MCF 10A (cell line): ENCODE measurements at regions of chr19 and their contacts with region 1.

Region 1: GRCh38 chr19:45469132-45469944 is 1.5 kb downstream of the FOSB start:
- DNase-seq: peak; percentile 97
- H3K4me3 Mint-ChIP-seq: peak overlapping the region; percentile 82
- H3K27ac Mint-ChIP-seq: peak overlapping the region; percentile 97
- H3K4me1 Mint-ChIP-seq: no peaks in the 10 kb centered on the region
- H3K27me3 Mint-ChIP-seq: no peaks in the 10 kb centered on the region
- CTCF ChIP-seq: no peak

Region 2: DNA sequence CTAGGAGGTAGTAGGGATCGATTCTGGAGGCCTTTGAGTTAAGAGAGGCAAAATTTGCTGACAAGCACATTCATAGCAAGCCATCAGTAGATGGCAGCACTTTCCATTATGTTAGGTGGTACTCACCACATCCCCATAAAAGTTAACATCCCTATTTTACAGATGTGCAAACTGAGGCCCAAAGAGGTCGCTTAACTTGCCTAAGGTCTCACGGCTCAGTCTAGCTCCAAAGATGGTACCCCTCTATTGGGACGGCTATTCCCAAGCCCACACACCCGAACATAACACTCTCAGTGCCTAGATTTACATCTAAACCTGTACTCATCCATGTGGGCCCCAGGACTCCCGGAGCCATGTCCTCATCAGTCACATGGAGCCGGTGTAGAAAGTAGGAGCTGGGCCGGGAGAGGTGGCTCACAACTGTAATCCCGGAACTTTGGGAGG is 23.0 kb before region 1 on chr19:
- CTCF ChIA-PET with region 1: interaction called, 386 read pairs
- POLR2A ChIA-PET with region 1: interaction called, 148 read pairs
- intact Hi-C with region 1: loop called (anchors 1 kb)
- DNase-seq: peak; percentile 60
- H3K4me3 Mint-ChIP-seq: no peak overlapping the region
- H3K27ac Mint-ChIP-seq: peak overlapping the region; percentile 100
- H3K4me1 Mint-ChIP-seq: peaks cover 52% of the 10 kb centered on the region
- H3K27me3 Mint-ChIP-seq: no peaks in the 10 kb centered on the region
- CTCF ChIP-seq: peak; percentile 31

Region 3: GRCh38 chr19:45455707-45456499 is 13.4 kb before region 1 on chr19:
- CTCF ChIA-PET with region 1: interaction called, 14 read pairs
- POLR2A ChIA-PET with region 1: interaction called, 120 read pairs
- intact Hi-C with region 1: loop called (anchors 2 kb)
- DNase-seq: peak; percentile 98
- H3K4me3 Mint-ChIP-seq: peak overlapping the region; percentile 59
- H3K27ac Mint-ChIP-seq: peak overlapping the region; percentile 99
- H3K4me1 Mint-ChIP-seq: peaks cover 35% of the 10 kb centered on the region
- H3K27me3 Mint-ChIP-seq: no peaks in the 10 kb centered on the region
- CTCF ChIP-seq: no peak